GM18951 (cell line): ENCODE measurements at regions of chr15 and their contacts with region 1.

Region 1: DNA sequence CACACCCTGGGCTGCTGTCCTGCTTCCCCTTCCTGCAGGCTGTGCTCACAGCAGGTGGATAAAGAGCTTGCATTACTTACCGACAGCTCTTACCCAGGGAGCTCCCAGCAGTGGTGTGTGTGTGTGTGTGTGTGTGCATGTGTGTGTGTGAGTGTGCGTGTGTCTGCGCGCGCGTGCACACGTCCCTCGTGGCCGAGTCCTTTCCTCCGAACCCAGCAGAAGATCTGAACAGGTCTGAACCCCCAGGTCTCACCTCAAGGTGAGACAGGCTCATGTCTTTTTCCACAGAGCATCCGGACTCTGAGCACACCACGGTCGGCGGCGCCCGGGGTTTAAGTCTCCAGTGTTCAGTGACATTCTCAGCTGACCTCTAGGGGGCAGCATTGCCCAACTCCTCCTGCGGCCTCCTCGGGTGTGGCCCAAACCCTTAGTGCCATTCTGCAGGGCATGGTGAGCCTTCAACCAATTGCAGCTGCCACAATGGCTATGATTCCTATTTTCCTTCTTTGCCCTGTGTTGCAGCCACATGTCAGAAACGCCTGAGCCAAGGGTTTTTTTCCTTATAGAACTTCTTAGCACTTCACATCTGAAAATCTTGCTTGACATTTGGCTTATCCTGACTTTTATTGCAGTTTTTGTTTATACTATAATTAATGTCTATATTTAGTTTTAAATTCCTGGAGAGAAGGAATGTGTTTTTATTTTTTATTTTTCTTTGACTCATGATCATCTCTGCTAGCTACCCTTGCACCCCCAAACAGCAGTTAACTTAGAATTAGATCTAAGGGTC is 64.1 kb upstream of the KLHL25 start:
- POLR2A ChIP-seq: no peak

Region 2: DNA sequence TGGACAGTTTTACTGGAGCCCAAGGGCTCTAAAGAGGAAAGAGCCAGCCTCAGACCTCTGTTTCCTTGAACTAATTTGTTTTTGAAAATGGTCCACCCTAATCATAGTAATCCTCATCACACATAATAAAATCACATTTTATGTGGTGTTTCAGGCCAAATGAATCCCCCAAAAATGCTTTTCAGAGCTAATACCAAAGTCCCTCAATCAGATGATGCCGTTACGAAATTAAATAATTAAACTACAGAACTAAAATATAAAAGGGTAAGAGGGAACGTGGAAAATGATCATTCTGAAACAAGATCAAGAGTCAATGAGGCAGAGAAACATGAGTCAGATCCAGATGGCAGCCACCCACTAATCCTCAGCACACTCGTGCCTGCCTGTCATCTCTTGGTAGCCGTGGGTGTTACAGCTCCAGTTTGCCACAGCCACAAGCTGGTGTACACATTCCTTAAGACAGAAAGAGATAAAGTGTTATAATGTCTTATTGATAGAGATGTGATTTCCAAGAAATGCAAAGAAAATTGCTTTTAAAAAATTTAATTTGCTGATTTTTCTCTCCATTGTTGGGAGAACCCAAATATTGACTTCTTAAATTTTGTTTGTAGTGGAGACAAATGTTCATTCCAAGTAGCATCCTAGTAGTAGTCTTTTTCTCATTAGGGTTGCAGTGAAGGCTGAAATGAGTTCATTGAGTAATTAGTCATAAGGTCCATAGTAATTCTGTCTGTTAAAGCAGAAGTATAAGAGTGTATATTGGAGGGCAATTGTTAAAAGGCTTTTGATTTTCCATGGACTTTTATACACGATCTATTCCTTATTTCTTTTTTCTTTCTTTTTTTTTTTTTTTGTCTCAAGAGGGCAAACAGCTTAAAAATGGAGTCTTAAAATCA is 325.1 kb after region 1 on chr15:
- in situ Hi-C with region 1: loop called (anchors 25 kb)
- POLR2A ChIP-seq: no peak

Region 3: GRCh38 chr15:86743283-86743903 is 884.6 kb after region 1 on chr15:
- in situ Hi-C with region 1: loop called (anchors 25 kb)
- POLR2A ChIP-seq: no peak